ENCODE measurements at regions of chr3 and their contacts with region 1.

Region 1: GRCh38 chr3:29280404-29281093 is at the start of gene RBMS3:
- DNase-seq: peak; percentile 92 to 94 (median 93)
- ATAC-seq: peak; percentile 96
- H3K4me3 ChIP-seq: peak within 1 kb of the TSS; percentile 99
- H3K27ac ChIP-seq: peak within 1 kb of the TSS; percentile 98
- H3K4me1 ChIP-seq: peaks cover 4% of the 10 kb centered on the region
- H3K27me3 ChIP-seq: no peaks in the 10 kb centered on the region
- total RNA-seq, gene RBMS3: 51.4 to 66.7 (median 56.8) TPM

Region 2: GRCh38 chr3:29171043-29171990 is 109.2 kb before region 1 on chr3:
- intact Hi-C with region 1: loop called in 1 of 4 experiments (anchors 10 kb)
- DNase-seq: no peak
- ATAC-seq: peak; percentile 65 to 81
- H3K4me3 ChIP-seq: no peak overlapping the region
- H3K27ac ChIP-seq: peak overlapping the region; percentile 64
- H3K4me1 ChIP-seq: peaks cover 2% of the 10 kb centered on the region
- H3K27me3 ChIP-seq: no peaks in the 10 kb centered on the region

Region 3: GRCh38 chr3:29212789-29213433 is 67.6 kb before region 1 on chr3:
- intact Hi-C with region 1: no loop called
- DNase-seq: no peak
- ATAC-seq: no peak
- H3K4me3 ChIP-seq: no peak overlapping the region
- H3K27ac ChIP-seq: no peak overlapping the region
- H3K4me1 ChIP-seq: no peaks in the 10 kb centered on the region
- H3K27me3 ChIP-seq: no peaks in the 10 kb centered on the region

Region 4: GRCh38 chr3:29409409-29409808 is 128.9 kb after region 1 on chr3:
- intact Hi-C with region 1: loop called in 1 of 4 experiments (anchors 10 kb)
- DNase-seq: no peak
- ATAC-seq: peak; percentile 58 to 59
- H3K4me3 ChIP-seq: no peak overlapping the region
- H3K27ac ChIP-seq: no peak overlapping the region
- H3K4me1 ChIP-seq: peaks cover 3% of the 10 kb centered on the region
- H3K27me3 ChIP-seq: no peaks in the 10 kb centered on the region

Region 5: GRCh38 chr3:29683018-29683993 is 402.8 kb after region 1 on chr3:
- intact Hi-C with region 1: loop called in 1 of 4 experiments (anchors 10 kb)
- DNase-seq: no peak
- ATAC-seq: peak; percentile 82 to 92
- H3K4me3 ChIP-seq: no peak overlapping the region
- H3K27ac ChIP-seq: peak overlapping the region; percentile 53
- H3K4me1 ChIP-seq: no peaks in the 10 kb centered on the region
- H3K27me3 ChIP-seq: no peaks in the 10 kb centered on the region

Region 6: DNA sequence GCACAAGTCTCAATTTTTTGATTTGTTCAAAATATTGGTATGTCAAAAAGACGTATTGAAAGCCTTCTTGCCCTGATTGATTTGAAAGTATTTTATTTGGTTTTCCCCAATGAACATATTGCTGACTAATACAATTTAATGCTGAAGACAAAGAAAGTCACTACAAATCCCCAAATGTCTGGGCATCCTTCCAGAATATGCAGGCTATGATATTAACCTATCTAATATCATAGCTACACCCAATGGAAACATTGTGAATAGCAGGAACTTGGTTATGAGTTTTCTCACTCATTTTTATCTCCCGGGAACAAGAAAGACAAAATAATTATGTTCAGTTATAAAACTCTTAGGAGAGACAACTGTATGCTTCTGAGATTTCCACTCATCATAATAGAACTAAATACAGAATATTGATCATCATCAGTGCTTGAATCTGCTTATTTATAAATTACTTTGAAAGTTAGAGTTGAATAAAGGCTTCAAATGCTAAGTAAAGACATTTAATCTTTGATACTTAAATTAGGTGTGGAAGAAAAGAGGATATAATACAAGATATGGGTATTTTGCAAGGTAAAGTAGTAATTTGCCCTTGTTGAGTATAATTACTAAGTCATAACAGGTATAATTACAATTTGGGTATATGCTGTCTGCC is 484.2 kb after region 1 on chr3:
- intact Hi-C with region 1: loop called (anchors 5 to 10 kb)
- DNase-seq: no peak
- ATAC-seq: peak; percentile 63 to 72
- H3K4me3 ChIP-seq: no peak overlapping the region
- H3K27ac ChIP-seq: no peak overlapping the region
- H3K4me1 ChIP-seq: peaks cover 3% of the 10 kb centered on the region
- H3K27me3 ChIP-seq: no peaks in the 10 kb centered on the region